ENCODE measurements at regions of chr1 and their contacts with region 1.

Region 1: GRCh38 chr1:224052772-224053171 is 61.1 kb upstream of the FBXO28 start:
- DNase-seq: no peak
- H3K4me3 ChIP-seq: no peak overlapping the region
- H3K27ac ChIP-seq: no peak overlapping the region
- H3K4me1 ChIP-seq: no peaks in the 10 kb centered on the region
- CTCF ChIP-seq: no peak

Region 2: DNA sequence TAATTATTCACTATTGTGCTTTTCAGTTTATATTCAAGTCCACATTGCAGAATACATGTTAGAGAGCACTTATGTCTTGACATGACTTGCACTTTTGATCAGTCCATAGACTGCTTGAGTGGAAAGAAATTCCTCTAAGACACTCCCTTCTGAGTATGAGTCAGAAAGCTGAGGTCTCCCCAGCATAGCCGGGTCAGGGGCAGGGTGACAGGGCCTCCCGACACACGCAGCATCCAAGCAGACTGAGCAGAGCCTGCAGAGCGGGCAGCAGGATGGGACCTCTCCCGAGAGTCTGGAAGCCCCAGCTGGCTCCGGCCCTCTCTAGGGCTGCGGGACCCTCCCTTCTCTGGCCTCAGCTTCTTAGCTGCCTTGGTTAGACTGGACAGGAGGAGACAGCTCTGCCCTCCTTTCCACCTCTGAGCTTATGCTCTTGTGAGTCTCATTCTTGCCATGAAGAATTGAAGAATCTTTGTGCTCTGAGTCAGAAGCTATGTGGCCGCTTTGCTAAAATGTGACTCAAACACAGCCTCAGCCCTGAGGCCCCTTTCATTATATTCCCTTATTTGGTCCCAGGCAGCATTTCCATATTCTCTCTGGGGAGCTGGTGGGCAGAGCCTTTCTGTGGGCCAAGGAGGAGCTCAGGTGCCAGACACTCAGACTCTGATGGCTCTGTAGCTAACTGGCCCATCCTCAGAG is 351.7 kb before region 1 on chr1:
- CTCF ChIA-PET with region 1: no interaction called
- POLR2A ChIA-PET with region 1: no interaction called
- intact Hi-C with region 1: loop called (anchors 1 kb)
- DNase-seq: no peak
- H3K4me3 ChIP-seq: no peak overlapping the region
- H3K27ac ChIP-seq: no peak overlapping the region
- H3K4me1 ChIP-seq: no peaks in the 10 kb centered on the region
- CTCF ChIP-seq: no peak

Region 3: DNA sequence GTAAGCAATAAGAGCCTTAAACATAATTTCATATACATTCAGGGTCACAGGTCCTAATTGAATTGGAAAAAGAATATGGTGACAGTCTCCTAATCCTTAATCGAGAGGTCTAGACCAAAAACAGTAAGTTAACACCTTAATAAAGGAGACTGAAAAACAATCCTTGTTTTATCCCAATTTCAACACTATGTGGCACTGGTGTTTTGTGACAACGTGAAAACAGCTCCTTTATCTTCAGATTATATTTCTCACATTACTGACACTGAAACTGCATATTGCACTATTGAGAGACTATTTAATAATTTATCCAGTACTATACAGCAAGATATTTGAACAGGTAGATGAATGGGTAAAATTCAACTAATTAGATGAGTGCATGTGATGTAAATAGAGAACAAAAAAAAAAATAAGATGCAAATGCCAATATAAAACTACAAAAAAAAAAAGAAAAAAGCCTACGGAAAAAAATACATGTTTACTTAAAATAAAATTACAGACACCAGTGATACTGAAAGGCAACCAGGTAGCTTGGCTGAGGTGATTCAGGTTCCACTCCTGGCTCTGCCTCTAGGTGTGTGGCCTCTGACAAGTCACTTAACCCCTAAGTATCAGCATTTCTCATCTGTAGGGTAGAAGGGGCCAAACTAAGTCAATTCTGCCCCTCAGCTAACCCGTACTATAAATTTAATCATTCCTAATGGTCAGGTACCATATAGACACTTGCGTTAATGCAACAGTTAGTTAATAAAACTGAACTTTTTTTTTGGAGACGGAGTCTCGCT is 240.9 kb before region 1 on chr1:
- CTCF ChIA-PET with region 1: no interaction called
- POLR2A ChIA-PET with region 1: no interaction called
- intact Hi-C with region 1: loop called (anchors 1 kb)
- DNase-seq: peak; percentile 26
- H3K4me3 ChIP-seq: no peak overlapping the region
- H3K27ac ChIP-seq: no peak overlapping the region
- H3K4me1 ChIP-seq: peaks cover 15% of the 10 kb centered on the region
- CTCF ChIP-seq: peak; percentile 78

Region 4: GRCh38 chr1:224092601-224093000 is 39.8 kb after region 1 on chr1:
- CTCF ChIA-PET with region 1: no interaction called
- POLR2A ChIA-PET with region 1: no interaction called
- intact Hi-C with region 1: no loop called
- DNase-seq: no peak
- H3K4me3 ChIP-seq: no peak overlapping the region
- H3K27ac ChIP-seq: no peak overlapping the region
- H3K4me1 ChIP-seq: no peaks in the 10 kb centered on the region
- CTCF ChIP-seq: no peak

Region 5: GRCh38 chr1:224588515-224588914 is 535.7 kb after region 1 on chr1:
- CTCF ChIA-PET with region 1: interaction called, 11 read pairs
- POLR2A ChIA-PET with region 1: no interaction called
- intact Hi-C with region 1: no loop called
- DNase-seq: no peak
- H3K4me3 ChIP-seq: no peak overlapping the region
- H3K27ac ChIP-seq: no peak overlapping the region
- H3K4me1 ChIP-seq: peaks cover 14% of the 10 kb centered on the region
- CTCF ChIP-seq: no peak